Lower leg skin (tissue), 4 donors: ENCODE measurements at regions of chr2 and their contacts with region 1.

Region 1: DNA sequence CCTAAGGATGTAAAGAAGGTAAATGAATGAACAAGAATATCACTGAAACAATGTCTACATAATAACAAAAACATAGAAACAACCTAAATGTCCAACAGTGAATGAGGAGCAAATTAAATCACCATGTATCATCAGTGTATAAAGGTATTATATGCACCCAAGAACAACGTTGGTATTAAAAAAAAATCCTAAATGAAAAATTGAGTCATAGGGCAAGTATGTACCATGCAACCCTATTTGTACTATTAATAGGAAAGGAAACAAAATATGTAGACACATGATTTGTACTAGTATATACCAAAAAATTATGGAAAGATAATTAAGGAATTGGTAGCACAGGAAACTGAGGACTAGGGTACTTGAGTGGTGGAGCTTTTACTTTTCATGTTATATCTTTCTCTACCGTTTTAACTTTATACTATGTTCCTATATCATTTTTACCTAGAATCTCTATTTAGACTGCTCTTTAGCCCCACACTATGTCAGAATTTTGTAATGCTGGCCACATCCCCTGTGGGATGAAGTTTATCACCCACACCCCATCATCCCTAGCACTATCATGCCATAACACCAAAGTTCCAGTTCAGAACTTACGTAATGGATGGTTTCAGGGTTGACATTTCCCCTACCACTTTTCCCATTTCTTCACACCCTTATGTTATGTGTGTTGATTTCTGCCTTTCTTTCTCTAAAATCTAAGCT is 25.6 kb downstream of the IKZF2 start:
- DNase-seq: no peak
- H3K4me3 ChIP-seq: no peak overlapping the region
- CTCF ChIP-seq: no peak
- POLR2A ChIP-seq: no peak

Region 2: DNA sequence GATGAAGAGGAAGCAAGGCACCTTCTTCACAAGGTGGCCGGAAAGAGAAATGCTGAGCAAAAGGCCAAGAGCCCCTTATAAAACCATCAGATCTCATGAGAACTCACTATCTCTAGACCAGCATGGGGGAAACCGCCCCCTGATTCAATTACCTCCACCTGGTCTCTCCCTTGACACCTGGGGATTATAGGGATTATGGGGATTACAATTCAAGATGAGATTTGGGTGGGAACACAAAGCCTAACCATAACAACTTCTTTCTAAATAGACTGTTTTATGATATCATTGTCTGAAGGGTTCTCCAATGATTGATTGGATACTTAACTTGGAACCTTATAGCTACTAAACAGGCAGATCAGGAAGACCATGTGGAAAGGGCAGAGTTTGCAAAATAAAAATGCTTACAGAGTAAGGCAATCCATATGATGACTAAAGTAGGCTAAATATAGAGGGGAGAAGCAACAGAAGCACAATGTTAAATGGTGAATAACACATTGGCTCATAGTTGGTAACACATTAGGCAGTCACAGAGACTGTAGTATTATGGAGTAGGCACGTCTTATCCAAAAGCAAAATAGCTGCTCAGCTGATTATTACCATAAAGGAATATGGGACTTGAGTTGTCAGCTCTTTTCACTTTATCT is 1504.7 kb after region 1 on chr2:
- intact Hi-C with region 1: loop called (anchors 5 kb)
- DNase-seq: no peak
- H3K4me3 ChIP-seq: no peak overlapping the region
- CTCF ChIP-seq: no peak
- POLR2A ChIP-seq: no peak